OCI-LY7 (cell line): ENCODE measurements at regions of chr1 and their contacts with region 1.

Region 1: GRCh38 chr1:155978325-155978972 is at the start of gene ARHGEF2:
- DNase-seq: peak; percentile 94
- H3K4me3 ChIP-seq: peak within 1 kb of the TSS; percentile 85
- H3K27ac ChIP-seq: peak within 1 kb of the TSS; percentile 94
- H3K4me1 ChIP-seq: peaks cover 68% of the 10 kb centered on the region
- CTCF ChIP-seq: peak; percentile 70
- total RNA-seq, gene ARHGEF2: 78.8 and 106 TPM in 2 replicates

Region 2: GRCh38 chr1:155946633-155947219 is 31.7 kb before region 1 on chr1:
- CTCF ChIA-PET with region 1: interaction called, 8 read pairs
- POLR2A ChIA-PET with region 1: interaction called, 34 read pairs
- intact Hi-C with region 1: loop called (anchors 1 kb)
- DNase-seq: no peak
- H3K4me3 ChIP-seq: peak overlapping the region; percentile 37
- H3K27ac ChIP-seq: peak overlapping the region; percentile 96
- H3K4me1 ChIP-seq: peaks cover 60% of the 10 kb centered on the region
- CTCF ChIP-seq: no peak

Region 3: GRCh38 chr1:156096640-156097391 is 118.4 kb after region 1 on chr1:
- CTCF ChIA-PET with region 1: no interaction called
- POLR2A ChIA-PET with region 1: no interaction called
- intact Hi-C with region 1: no loop called
- DNase-seq: peak; percentile 82
- H3K4me3 ChIP-seq: no peak overlapping the region
- H3K27ac ChIP-seq: no peak overlapping the region
- H3K4me1 ChIP-seq: peaks cover 18% of the 10 kb centered on the region
- CTCF ChIP-seq: peak; percentile 99